Mammary epithelial cell (primary cell): ENCODE measurements at regions of chr16 and their contacts with region 1.

Region 1: GRCh38 chr16:47204736-47205504 is 61.2 kb upstream of the NETO2 start:
- DNase-seq: no peak
- H3K4me3 ChIP-seq: no peak overlapping the region
- H3K27ac ChIP-seq: no peak overlapping the region
- H3K4me1 ChIP-seq: no peaks in the 10 kb centered on the region
- H3K27me3 ChIP-seq: no peaks in the 10 kb centered on the region
- CTCF ChIP-seq: peak in 1 of 2 donors; percentile 20

Region 2: GRCh38 chr16:47247690-47248089 is 42.8 kb after region 1 on chr16:
- CTCF ChIA-PET with region 1: no interaction called
- dilution Hi-C with region 1: loop called (anchors 5 kb)
- in situ Hi-C with region 1: no loop called
- intact Hi-C with region 1: no loop called
- DNase-seq: no peak
- H3K4me3 ChIP-seq: no peak overlapping the region
- H3K27ac ChIP-seq: no peak overlapping the region
- H3K4me1 ChIP-seq: no peaks in the 10 kb centered on the region
- H3K27me3 ChIP-seq: no peaks in the 10 kb centered on the region
- CTCF ChIP-seq: no peak